IMR-90 (cell line): ENCODE measurements at regions of chr3 and their contacts with region 1.

Region 1: DNA sequence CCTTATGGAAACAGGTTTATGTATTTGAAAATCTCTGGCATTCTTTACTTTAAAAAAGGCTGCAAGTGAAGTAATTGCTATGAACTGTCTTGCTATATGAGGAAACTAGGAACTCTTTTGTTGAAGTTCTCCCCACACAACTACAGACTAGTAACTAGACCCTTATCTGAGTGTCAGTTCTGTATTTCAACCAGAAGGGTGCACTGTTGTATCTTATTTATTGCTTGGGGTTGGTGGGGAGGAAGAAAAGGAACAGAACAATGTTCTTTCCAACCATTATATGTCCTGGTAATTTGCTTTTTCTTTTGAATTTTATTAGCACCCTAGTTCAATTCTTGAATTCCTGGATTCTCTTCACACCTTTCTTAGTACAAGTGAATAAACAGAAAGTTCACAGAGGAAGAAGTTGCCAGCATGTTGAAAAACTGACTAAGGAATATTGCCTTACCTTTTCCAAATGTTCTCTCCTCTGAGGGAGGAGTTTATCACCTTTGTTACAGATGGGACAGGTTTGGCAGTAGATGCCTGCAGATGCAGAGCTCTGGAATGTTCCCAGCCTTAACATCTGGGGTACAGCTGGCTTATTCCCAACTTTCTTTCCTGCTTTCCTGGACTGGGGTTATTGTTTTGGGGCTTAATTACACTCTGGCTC is 162.4 kb upstream of the CFAP20DC start:
- DNase-seq: peak; percentile 60
- ATAC-seq: peak; percentile 97
- H3K4me3 ChIP-seq: no peak overlapping the region
- H3K27ac ChIP-seq: no peak overlapping the region
- H3K4me1 ChIP-seq: no peaks in the 10 kb centered on the region; the same call in 1 of the 2 replicates
- H3K27me3 ChIP-seq: no peaks in the 10 kb centered on the region
- CTCF ChIP-seq: peak; percentile 78
- POLR2A ChIP-seq: no peak
- RAD21 ChIP-seq: peak; percentile 85

Region 2: GRCh38 chr3:58640700-58641372 is 571.4 kb before region 1 on chr3:
- CTCF ChIA-PET with region 1: no interaction called
- POLR2A ChIA-PET with region 1: no interaction called
- dilution Hi-C with region 1: no loop called
- in situ Hi-C with region 1: loop called (anchors 10 kb)
- intact Hi-C with region 1: loop called (anchors 5 kb)
- DNase-seq: peak; percentile 74
- ATAC-seq: peak; percentile 97
- H3K4me3 ChIP-seq: no peak overlapping the region
- H3K27ac ChIP-seq: no peak overlapping the region
- H3K4me1 ChIP-seq: peaks cover 7% of the 10 kb centered on the region; the same call in 1 of the 2 replicates
- H3K27me3 ChIP-seq: no peaks in the 10 kb centered on the region
- CTCF ChIP-seq: peak; percentile 92
- POLR2A ChIP-seq: peak; percentile 27; the same call in 1 of the 2 replicates
- RAD21 ChIP-seq: peak; percentile 98

Region 3: DNA sequence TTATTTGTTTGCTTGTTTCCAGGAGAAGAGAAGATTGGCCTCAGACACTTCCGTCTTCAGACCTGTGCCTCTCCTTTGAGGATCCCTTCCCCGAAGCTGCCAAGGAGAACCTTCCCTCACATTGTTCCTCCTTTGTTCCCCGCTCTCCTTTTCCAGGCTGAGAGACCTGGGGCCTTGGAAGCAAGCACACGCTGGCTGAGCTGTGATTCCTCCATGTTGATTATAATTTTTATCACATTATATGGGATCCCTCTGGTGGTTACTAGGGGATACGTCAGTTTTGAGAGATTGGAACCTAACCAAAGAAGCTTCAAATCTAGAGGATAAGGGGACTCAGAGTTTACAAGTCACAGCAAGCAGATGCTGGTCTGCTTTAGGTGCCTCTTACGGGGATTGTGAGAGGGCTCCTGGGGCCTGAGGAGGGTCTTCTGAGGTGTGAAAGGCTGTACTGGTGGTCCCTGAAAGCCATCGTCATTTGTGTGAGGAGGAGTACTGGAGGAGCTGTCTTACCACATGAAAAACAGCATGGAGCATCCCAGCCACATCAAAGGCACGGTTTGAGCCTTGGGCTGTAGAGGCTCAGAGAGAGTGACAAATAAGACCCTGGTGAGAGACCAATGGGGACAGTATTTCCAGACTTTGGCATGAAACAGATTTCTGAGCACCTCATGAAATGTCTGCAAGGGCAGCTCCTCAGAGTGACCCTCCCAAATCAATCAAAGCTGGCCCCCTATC is 597.6 kb after region 1 on chr3:
- CTCF ChIA-PET with region 1: interaction called, 3 read pairs
- POLR2A ChIA-PET with region 1: no interaction called
- dilution Hi-C with region 1: no loop called
- in situ Hi-C with region 1: no loop called
- intact Hi-C with region 1: loop called (anchors 1 kb)
- DNase-seq: peak; percentile 57
- ATAC-seq: peak; percentile 33; the same call in 1 of the 2 replicates
- H3K4me3 ChIP-seq: no peak overlapping the region
- H3K27ac ChIP-seq: peak overlapping the region; percentile 71
- H3K4me1 ChIP-seq: peaks cover 10% of the 10 kb centered on the region
- H3K27me3 ChIP-seq: no peaks in the 10 kb centered on the region
- CTCF ChIP-seq: peak; percentile 47
- POLR2A ChIP-seq: no peak
- RAD21 ChIP-seq: peak; percentile 47

Region 4: GRCh38 chr3:60316121-60316797 is 1104.0 kb after region 1 on chr3:
- CTCF ChIA-PET with region 1: no interaction called
- POLR2A ChIA-PET with region 1: no interaction called
- dilution Hi-C with region 1: no loop called
- in situ Hi-C with region 1: no loop called
- intact Hi-C with region 1: loop called (anchors 10 kb)
- DNase-seq: peak; percentile 78
- ATAC-seq: peak; percentile 63
- H3K4me3 ChIP-seq: no peak overlapping the region
- H3K27ac ChIP-seq: no peak overlapping the region
- H3K4me1 ChIP-seq: no peaks in the 10 kb centered on the region; the same call in 1 of the 2 replicates
- H3K27me3 ChIP-seq: no peaks in the 10 kb centered on the region
- CTCF ChIP-seq: no peak
- POLR2A ChIP-seq: no peak
- RAD21 ChIP-seq: no peak

Region 5: DNA sequence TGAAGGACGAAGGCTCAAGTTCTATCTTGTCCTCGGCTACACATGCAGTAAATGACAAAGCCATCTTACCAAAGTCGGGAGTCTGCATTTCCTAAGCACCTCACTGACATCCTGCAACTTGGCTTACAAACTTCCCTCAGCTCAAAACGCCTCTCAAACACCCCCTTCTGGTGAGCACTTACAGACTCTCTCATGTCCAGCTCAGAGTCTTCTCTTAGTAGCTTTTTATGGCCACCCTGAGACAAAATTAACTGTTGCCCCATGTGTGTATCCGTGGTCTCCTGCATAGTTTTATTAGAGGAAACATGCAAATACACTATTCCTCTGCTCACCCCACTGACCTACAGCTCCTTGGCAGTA is 1219.3 kb after region 1 on chr3:
- CTCF ChIA-PET with region 1: no interaction called
- POLR2A ChIA-PET with region 1: no interaction called
- dilution Hi-C with region 1: no loop called
- in situ Hi-C with region 1: no loop called
- intact Hi-C with region 1: loop called (anchors 2 kb)
- DNase-seq: peak; percentile 48
- ATAC-seq: peak; percentile 85
- H3K4me3 ChIP-seq: no peak overlapping the region
- H3K27ac ChIP-seq: no peak overlapping the region
- H3K4me1 ChIP-seq: no peaks in the 10 kb centered on the region
- H3K27me3 ChIP-seq: no peaks in the 10 kb centered on the region
- CTCF ChIP-seq: peak; percentile 28
- POLR2A ChIP-seq: no peak
- RAD21 ChIP-seq: peak; percentile 39